Activated CD4-positive, alpha-beta T cell treated with anti-CD3 and anti-CD28 coated beads for 36 hours (primary cell): ENCODE measurements at regions of chr6 and their contacts with region 1.

Region 1: DNA sequence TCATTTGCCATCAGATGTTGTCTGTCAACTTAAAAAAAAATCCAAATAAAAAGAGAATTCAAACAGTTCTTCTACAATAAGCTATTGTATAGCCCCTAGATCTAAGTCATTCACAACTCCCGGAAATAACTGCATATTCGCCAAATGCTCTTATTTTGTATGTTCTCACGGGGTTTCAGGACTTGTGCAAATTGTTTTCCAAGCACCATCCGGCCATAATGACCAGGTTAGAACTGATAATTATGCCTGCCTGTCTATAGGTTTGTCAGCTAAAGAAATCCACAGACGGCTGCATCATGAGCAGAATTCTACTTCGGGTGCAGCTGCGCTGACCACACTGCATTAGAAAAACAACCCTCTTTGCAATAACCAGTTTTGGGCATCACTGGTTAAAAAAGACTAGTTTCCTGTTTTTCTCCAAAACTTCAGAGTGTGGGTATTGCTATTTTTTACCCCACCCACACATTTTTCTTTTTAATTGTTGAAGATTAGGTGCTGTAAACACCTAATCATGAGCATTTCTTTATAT is 87.7 kb downstream of the HIVEP2 start:
- DNase-seq: no peak
- ATAC-seq: no peak
- H3K4me3 Mint-ChIP-seq: peak overlapping the region; percentile 60
- H3K27ac Mint-ChIP-seq: peak overlapping the region; percentile 90
- H3K4me1 Mint-ChIP-seq: peaks cover 92% of the 10 kb centered on the region
- H3K27me3 Mint-ChIP-seq: no peaks in the 10 kb centered on the region

Region 2: GRCh38 chr6:142679907-142680700 is 177.2 kb before region 1 on chr6:
- CTCF ChIA-PET with region 1: no interaction called
- POLR2A ChIA-PET with region 1: interaction called, 12 read pairs
- intact Hi-C with region 1: no loop called
- DNase-seq: peak; percentile 61
- ATAC-seq: peak; percentile 83
- H3K4me3 Mint-ChIP-seq: no peak overlapping the region
- H3K27ac Mint-ChIP-seq: no peak overlapping the region
- H3K4me1 Mint-ChIP-seq: peaks cover 18% of the 10 kb centered on the region
- H3K27me3 Mint-ChIP-seq: no peaks in the 10 kb centered on the region

Region 3: DNA sequence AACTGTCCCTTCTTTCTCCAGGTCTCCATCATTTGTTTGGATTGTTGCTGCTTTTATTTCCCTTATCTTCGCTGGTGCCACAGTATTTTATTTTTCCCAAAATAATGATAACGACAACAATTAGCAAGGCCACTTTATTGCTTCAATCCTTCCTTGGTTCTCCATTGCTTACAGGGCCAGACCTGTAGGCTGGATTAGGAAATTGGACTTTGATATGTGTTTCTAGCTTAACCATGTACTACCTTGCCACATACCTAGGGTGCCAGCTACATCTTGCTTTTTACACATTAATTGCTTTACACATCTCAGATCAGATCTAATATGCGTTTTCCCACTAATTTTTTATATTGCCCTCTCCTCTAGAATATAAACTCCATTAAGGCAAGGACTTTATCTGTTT is 107.7 kb before region 1 on chr6:
- CTCF ChIA-PET with region 1: no interaction called
- POLR2A ChIA-PET with region 1: interaction called, 13 read pairs
- intact Hi-C with region 1: no loop called
- DNase-seq: no peak
- ATAC-seq: no peak
- H3K4me3 Mint-ChIP-seq: no peak overlapping the region
- H3K27ac Mint-ChIP-seq: no peak overlapping the region
- H3K4me1 Mint-ChIP-seq: peaks cover 11% of the 10 kb centered on the region
- H3K27me3 Mint-ChIP-seq: no peaks in the 10 kb centered on the region

Region 4: DNA sequence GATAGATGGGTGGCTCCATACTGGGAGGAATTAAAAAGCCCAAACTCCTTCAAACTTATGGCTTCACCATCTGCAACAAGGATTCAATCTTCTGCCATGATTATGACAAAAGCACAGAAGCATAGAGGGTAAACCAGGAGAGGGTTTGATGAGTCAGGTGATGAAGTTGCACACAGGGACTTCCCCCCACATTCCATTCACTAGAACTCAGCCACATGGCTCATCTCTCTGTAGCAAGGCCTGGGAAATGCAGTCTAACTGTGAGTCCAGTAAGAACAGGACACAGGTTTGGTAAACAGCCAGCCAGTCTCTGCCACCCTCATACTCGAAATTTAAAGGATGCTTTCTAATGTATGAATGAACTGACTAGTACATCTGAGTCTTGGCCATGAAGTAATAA is 55.2 kb before region 1 on chr6:
- CTCF ChIA-PET with region 1: no interaction called
- POLR2A ChIA-PET with region 1: no interaction called
- intact Hi-C with region 1: no loop called
- DNase-seq: peak; percentile 73
- ATAC-seq: peak; percentile 92
- H3K4me3 Mint-ChIP-seq: no peak overlapping the region
- H3K27ac Mint-ChIP-seq: peak overlapping the region; percentile 91
- H3K4me1 Mint-ChIP-seq: peaks cover 94% of the 10 kb centered on the region
- H3K27me3 Mint-ChIP-seq: no peaks in the 10 kb centered on the region

Region 5: GRCh38 chr6:142871910-142872331 is 14.6 kb after region 1 on chr6:
- CTCF ChIA-PET with region 1: interaction called, 12 read pairs
- POLR2A ChIA-PET with region 1: interaction called, 5 read pairs
- intact Hi-C with region 1: loop called in 1 of 2 experiments (anchors 1 kb)
- DNase-seq: peak; percentile 72
- ATAC-seq: peak; percentile 93
- H3K4me3 Mint-ChIP-seq: peak overlapping the region; percentile 42
- H3K27ac Mint-ChIP-seq: peak overlapping the region; percentile 91
- H3K4me1 Mint-ChIP-seq: peaks cover 86% of the 10 kb centered on the region
- H3K27me3 Mint-ChIP-seq: no peaks in the 10 kb centered on the region

Region 6: DNA sequence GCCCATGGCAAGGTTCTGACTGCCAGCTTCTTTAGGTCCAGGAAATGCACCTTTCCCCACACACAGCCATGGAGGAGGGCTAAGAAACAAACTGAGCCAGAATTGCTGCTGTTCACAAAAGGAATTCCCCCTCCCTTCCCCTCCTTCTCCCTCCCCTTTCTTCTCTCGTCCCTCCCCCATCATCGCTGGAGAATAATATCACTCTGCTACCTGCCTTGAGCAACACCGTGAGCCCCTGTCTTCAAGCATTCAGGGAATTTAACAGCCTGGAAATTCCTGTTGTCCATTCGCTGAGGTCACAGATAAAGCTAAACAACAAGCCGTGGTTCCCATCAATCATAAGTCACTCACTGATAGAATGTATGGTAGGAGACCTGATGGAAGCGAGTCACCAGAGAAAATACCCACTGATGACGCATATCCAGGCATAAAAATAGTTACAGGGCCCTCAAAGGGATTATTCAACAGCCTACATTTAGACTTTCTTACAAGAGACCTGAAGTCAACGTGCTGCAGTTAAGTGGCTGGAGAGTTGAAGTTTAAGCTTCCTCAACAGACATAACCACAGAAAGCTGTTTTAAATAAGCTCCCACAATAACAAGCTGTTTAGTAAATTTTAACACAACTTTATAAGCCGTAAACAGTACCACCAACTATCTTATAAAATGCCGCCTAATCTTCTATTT is 28.0 kb after region 1 on chr6:
- CTCF ChIA-PET with region 1: interaction called, 5 read pairs
- POLR2A ChIA-PET with region 1: interaction called, 5 read pairs
- intact Hi-C with region 1: loop called in 1 of 2 experiments (anchors 1 kb)
- DNase-seq: peak; percentile 55
- ATAC-seq: peak; percentile 82
- H3K4me3 Mint-ChIP-seq: peak overlapping the region; percentile 76
- H3K27ac Mint-ChIP-seq: peak overlapping the region; percentile 99
- H3K4me1 Mint-ChIP-seq: peaks cover 88% of the 10 kb centered on the region
- H3K27me3 Mint-ChIP-seq: no peaks in the 10 kb centered on the region